CD8-positive, alpha-beta T cell (primary cell): ENCODE measurements at regions of chr5 and their contacts with region 1.

Region 1: GRCh38 chr5:176415952-176416924 is at the start of gene CLTB:
- DNase-seq: peak; percentile 83 to 97 (median 91)
- ATAC-seq: peak; percentile 91
- H3K4me3 ChIP-seq: peak within 1 kb of the TSS; percentile 68 to 89
- H3K4me3 Mint-ChIP-seq: peak within 1 kb of the TSS; percentile 83
- H3K27ac ChIP-seq: peak within 1 kb of the TSS; percentile 69 to 78
- H3K27ac Mint-ChIP-seq: peak within 1 kb of the TSS; percentile 87
- H3K4me1 ChIP-seq: peaks cover 25% of the 10 kb centered on the region
- H3K4me1 Mint-ChIP-seq: peaks cover 42% of the 10 kb centered on the region
- H3K27me3 ChIP-seq: no peaks in the 10 kb centered on the region
- H3K27me3 Mint-ChIP-seq: no peaks in the 10 kb centered on the region
- CTCF ChIP-seq: peak; percentile 82
- total RNA-seq, gene CLTB: 84.3 to 86.6 TPM

Region 2: DNA sequence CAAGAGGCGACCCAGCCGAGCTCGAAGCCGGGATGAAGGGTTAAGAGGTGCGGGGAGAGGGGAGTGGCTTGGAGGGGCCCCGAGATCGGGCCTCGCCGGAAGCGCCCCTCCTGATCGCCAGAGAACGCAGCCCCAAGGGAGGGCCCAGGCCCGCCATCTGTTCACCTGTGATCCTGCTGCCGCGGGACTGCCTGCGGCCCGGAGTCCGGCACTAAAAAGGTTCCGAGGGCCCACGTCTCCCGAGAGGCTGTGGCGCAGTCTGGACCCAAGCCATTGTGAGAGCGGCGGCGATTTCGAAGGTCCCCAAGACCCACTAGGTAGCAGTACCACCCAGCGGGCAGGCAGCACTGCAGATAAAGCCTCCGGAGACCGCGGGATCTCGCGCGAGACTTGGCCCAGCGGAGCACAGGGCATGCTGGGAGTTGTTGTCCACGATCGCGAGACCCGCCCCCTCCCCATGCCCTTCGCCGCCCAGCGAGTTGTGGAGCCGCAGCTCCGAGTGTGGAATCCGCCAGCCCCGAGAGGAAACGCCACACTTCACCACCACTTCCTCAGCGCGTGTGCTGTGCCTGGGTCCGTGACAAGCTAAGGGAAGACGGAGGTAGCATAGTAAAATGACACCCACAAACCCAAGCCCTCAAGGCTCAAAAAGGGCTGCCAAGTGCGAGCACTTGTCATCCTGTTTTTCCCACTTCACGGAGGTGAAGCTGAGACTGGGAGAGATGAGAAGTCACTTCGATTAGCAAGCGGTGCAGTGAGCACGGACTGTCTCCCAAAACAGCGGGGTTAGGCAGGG is 54.6 kb before region 1 on chr5 and contains the start of gene KIAA1191:
- CTCF ChIA-PET with region 1: interaction called, 4 read pairs
- POLR2A ChIA-PET with region 1: interaction called, 4 read pairs
- intact Hi-C with region 1: loop called (anchors 1 kb)
- DNase-seq: peak; percentile 91 to 98 (median 95)
- ATAC-seq: peak; percentile 89
- H3K4me3 ChIP-seq: peak within 1 kb of the TSS; percentile 72 to 96
- H3K4me3 Mint-ChIP-seq: peak within 1 kb of the TSS; percentile 98
- H3K27ac ChIP-seq: peak within 1 kb of the TSS; percentile 68 to 86
- H3K27ac Mint-ChIP-seq: peak within 1 kb of the TSS; percentile 98
- H3K4me1 ChIP-seq: peaks cover 31% of the 10 kb centered on the region
- H3K4me1 Mint-ChIP-seq: peaks cover 41% of the 10 kb centered on the region
- H3K27me3 ChIP-seq: no peaks in the 10 kb centered on the region
- H3K27me3 Mint-ChIP-seq: no peaks in the 10 kb centered on the region
- CTCF ChIP-seq: no peak
- total RNA-seq, gene KIAA1191: 78.2 to 85.1 TPM

Region 3: GRCh38 chr5:176429972-176430371 is 13.7 kb after region 1 on chr5:
- CTCF ChIA-PET with region 1: interaction called, 10 read pairs
- POLR2A ChIA-PET with region 1: interaction called, 3 read pairs
- intact Hi-C with region 1: no loop called
- DNase-seq: peak in 2 of 9 experiments; percentile 14 to 26
- ATAC-seq: no peak
- H3K4me3 ChIP-seq: no peak overlapping the region
- H3K4me3 Mint-ChIP-seq: no peak overlapping the region
- H3K27ac ChIP-seq: no peak overlapping the region
- H3K27ac Mint-ChIP-seq: no peak overlapping the region
- H3K4me1 ChIP-seq: peaks cover 8% of the 10 kb centered on the region
- H3K4me1 Mint-ChIP-seq: peaks cover 7% of the 10 kb centered on the region
- H3K27me3 ChIP-seq: no peaks in the 10 kb centered on the region
- H3K27me3 Mint-ChIP-seq: no peaks in the 10 kb centered on the region
- CTCF ChIP-seq: no peak

Region 4: DNA sequence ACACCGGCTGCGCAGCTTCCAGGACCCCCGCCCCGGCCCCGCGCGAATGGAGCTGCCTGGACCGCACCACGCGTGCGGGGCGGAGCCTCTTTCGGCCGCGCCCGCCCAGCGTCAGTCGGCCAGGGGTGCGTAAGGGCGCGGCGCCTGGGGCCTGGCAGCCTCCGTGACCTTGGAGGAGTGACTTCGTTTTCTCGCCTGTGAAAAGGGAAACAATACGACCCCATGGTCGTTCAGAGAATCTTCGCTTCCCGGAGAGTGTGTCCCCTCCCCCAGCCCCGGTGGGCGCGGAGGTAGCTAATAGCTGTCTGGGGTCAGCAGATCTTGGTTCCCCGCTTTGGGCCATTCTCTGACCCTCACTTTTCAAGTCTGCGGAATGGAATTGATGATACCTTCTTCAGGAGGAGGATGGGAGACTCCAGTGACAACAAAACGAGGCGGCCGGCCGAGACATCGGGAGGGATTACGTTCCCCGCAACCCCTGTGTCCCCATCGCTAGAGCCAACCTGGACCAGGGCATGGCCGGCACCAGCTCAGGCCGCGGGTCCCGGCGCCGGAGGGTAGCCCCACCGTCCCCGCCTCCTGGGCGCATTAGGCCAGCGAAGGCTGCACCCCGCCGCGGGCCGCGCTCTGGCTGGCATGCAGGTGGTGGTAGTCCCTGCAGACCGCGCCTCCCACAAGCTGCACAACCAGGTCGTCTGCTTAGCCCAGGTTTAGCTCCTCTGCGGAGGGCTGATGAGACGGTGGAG is 127.4 kb after region 1 on chr5:
- CTCF ChIA-PET with region 1: interaction called, 26 read pairs
- POLR2A ChIA-PET with region 1: interaction called, 14 read pairs
- intact Hi-C with region 1: loop called in 1 of 2 experiments (anchors 1 kb)
- DNase-seq: peak; percentile 52 to 89 (median 72)
- ATAC-seq: peak; percentile 57
- H3K4me3 ChIP-seq: peak overlapping the region; percentile 70 to 91
- H3K4me3 Mint-ChIP-seq: peak overlapping the region; percentile 91
- H3K27ac ChIP-seq: peak overlapping the region; percentile 87 to 89
- H3K27ac Mint-ChIP-seq: peak overlapping the region; percentile 96
- H3K4me1 ChIP-seq: peaks cover 68% of the 10 kb centered on the region
- H3K4me1 Mint-ChIP-seq: peaks cover 74% of the 10 kb centered on the region
- H3K27me3 ChIP-seq: no peaks in the 10 kb centered on the region
- H3K27me3 Mint-ChIP-seq: no peaks in the 10 kb centered on the region
- CTCF ChIP-seq: no peak

Region 5: GRCh38 chr5:176596689-176597416 is 180.6 kb after region 1 on chr5:
- CTCF ChIA-PET with region 1: interaction called, 8 read pairs
- POLR2A ChIA-PET with region 1: interaction called, 5 read pairs
- intact Hi-C with region 1: loop called (anchors 1 kb)
- DNase-seq: peak; percentile 44 to 84 (median 66)
- ATAC-seq: peak; percentile 81
- H3K4me3 ChIP-seq: peak overlapping the region; percentile 36 to 52
- H3K4me3 Mint-ChIP-seq: peak overlapping the region; percentile 77
- H3K27ac ChIP-seq: no peak overlapping the region
- H3K27ac Mint-ChIP-seq: no peak overlapping the region
- H3K4me1 ChIP-seq: peaks cover 9% of the 10 kb centered on the region
- H3K4me1 Mint-ChIP-seq: peaks cover 7% of the 10 kb centered on the region
- H3K27me3 ChIP-seq: no peaks in the 10 kb centered on the region
- H3K27me3 Mint-ChIP-seq: no peaks in the 10 kb centered on the region
- CTCF ChIP-seq: no peak

Region 6: GRCh38 chr5:176660860-176661641 is 244.8 kb after region 1 on chr5:
- CTCF ChIA-PET with region 1: interaction called, 7 read pairs
- POLR2A ChIA-PET with region 1: no interaction called
- intact Hi-C with region 1: loop called in 1 of 2 experiments (anchors 2 kb)
- DNase-seq: peak; percentile 51 to 88 (median 77)
- ATAC-seq: peak; percentile 75
- H3K4me3 ChIP-seq: no peak overlapping the region
- H3K4me3 Mint-ChIP-seq: peak overlapping the region; percentile 42
- H3K27ac ChIP-seq: no peak overlapping the region
- H3K27ac Mint-ChIP-seq: peak overlapping the region; percentile 70
- H3K4me1 ChIP-seq: peaks cover 27% of the 10 kb centered on the region
- H3K4me1 Mint-ChIP-seq: peaks cover 30% of the 10 kb centered on the region
- H3K27me3 ChIP-seq: no peaks in the 10 kb centered on the region
- H3K27me3 Mint-ChIP-seq: peaks cover 8% of the 10 kb centered on the region
- CTCF ChIP-seq: peak; percentile 98